ENCODE measurements at regions of chr14 and their contacts with region 1.

Region 1: DNA sequence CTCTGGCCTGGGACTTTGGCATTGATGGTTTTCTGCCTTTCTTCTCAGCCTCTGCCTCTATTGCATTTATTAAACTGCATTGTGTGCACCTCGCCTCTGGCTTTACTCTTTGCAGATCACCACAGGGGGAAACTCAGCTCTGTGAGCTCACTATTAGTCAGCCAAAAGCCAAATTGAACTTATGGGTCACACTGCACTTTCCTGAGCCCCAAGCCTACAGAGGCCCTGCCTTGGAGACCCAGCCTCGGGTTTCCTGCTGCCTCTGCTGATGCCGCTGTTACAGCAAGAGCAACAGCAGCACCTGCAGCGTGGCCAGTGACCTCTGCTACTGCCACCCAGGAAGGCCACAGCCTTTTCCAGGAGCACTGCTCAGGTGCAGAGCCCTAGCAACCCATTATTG is 122.5 kb downstream of the DAD1 start:
- DNase-seq: no peak
- ATAC-seq: no peak
- H3K4me3 ChIP-seq: no peak overlapping the region
- H3K27ac ChIP-seq: no peak overlapping the region
- H3K4me1 ChIP-seq: peaks cover 0 to 18% (median 1%) of the 10 kb centered on the region in 12 donors
- H3K27me3 ChIP-seq: no peaks in the 10 kb centered on the region
- CTCF ChIP-seq: no peak
- POLR2A ChIP-seq: no peak

Region 2: DNA sequence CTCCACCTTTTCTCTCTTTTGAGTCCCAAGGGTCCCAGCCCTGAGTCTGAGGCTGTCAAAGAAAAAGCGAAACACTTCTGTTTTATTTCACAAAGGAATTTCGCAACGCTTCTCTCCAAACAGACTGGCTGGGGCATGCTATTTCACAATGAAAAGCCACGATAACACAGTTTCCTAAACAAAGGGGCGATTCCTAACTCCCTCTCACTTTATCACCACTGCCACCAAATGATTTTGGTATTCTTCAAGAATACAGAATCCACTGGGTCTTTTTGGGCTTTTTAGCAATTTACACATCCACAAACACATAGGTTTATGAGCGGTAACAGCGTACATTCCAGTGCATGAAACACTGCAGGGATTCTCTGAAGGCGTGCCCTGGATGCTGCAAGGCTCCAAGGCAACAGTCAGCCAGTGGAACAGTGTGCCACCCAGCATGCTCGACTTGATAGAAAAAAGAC is 38.7 kb before region 1 on chr14:
- intact Hi-C with region 1: loop called in 2 of 10 experiments (anchors 5 kb)
- DNase-seq: peak in 2 of 5 donors; percentile 10 to 32
- ATAC-seq: peak in 3 of 4 donors; percentile 63 to 81 (median 72)
- H3K4me3 ChIP-seq: peak overlapping the region in 4 of 12 donors; percentile 10 to 30 (median 14)
- H3K27ac ChIP-seq: peak overlapping the region in 2 of 12 donors; percentile 19 to 61
- H3K4me1 ChIP-seq: peaks cover 0 to 42% (median 19%) of the 10 kb centered on the region in 12 donors
- H3K27me3 ChIP-seq: no peaks in the 10 kb centered on the region
- CTCF ChIP-seq: no peak
- POLR2A ChIP-seq: no peak